ENCODE measurements at regions of chr9 and their contacts with region 1.

Region 1: DNA sequence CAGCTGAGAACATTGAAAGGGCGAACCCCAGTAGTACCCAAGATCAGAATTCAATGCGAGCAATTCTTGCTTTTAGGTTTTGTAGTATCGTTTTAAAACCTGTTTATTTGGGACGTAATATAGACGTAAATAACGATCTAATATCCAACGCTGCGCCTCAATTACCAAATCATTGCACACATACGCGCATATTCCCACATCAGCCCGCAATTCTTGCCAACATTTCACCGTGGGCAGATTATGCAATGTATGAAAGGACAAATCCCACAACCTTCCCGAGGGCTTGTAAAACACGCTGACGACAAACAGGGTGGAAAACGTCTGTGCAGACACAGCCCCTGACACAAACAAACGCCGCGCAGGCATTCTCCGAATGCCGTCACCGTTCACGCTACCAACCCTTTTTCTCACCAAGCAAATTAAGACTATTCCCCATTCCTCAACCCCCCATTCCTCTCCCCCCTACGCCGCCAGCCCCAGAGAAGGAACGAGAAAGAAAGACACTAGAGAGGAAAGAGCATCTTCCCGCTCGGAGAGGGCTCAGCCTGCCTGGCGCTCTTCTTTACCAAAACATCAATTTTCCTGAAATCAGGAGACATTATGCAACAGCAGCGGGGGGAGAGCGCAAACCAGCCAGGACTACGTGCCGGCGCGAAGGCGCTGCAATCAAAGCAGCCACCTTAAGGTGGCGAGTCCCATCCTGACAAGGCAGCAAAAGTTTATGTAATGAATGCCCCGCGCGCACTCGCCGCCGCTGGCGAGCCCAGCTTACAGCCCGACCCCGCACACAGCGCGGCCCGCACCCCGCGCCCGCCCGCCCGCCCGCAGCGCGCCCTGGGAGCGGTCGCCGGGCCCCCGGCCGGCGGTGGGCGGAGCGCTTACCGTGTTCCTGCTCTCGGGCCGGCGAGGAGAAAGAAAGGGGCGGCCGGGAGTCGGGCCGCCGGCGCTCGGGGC is 597 bp downstream of the NFIL3 start:
- DNase-seq: peak; percentile 73 to 85
- ATAC-seq: peak; percentile 24
- H3K4me3 ChIP-seq: peak overlapping the region; percentile 90 to 99
- H3K27ac ChIP-seq: peak overlapping the region; percentile 97 to 98
- H3K4me1 ChIP-seq: peaks cover 4 to 5% of the 10 kb centered on the region in 2 donors
- H3K27me3 ChIP-seq: no peaks in the 10 kb centered on the region

Region 2: DNA sequence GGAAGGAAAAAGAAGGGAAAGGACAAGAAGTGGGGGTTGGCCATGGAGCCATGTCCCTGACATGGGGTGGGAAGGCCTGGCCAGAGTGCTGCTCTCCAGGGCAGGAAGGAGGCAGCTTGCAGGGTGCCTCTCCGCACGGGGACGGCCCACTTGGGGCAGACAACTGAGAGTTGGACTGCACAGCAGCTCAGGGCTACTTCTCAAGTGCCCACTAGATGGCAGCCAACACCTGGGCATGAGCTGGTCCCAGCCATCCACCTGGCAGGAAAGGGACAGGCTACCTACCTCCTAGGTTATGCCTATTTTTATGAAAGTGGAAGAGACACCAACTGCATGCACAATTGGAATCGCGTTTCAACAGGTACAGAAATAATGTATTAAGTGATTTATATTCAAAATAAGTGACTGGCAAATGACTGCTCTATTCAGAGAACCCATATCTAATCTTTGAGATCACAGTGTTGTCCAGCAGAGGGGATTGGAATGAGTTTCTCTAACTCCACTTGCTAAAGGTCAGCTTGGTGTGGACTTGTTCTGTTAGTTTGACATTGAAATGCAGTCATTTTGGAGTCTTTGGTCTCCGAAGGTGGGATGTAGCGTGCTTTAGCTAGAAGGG is 508.1 kb before region 1 on chr9:
- intact Hi-C with region 1: loop called in 1 of 2 experiments (anchors 5 kb)
- DNase-seq: peak; percentile 73 to 87
- ATAC-seq: peak; percentile 89
- H3K4me3 ChIP-seq: no peak overlapping the region
- H3K27ac ChIP-seq: no peak overlapping the region
- H3K4me1 ChIP-seq: peaks cover 0 to under 1% of the 10 kb centered on the region in 2 donors
- H3K27me3 ChIP-seq: no peaks in the 10 kb centered on the region

Region 3: GRCh38 chr9:91036826-91037510 is 386.1 kb before region 1 on chr9:
- intact Hi-C with region 1: loop called in 1 of 2 experiments (anchors 5 kb)
- DNase-seq: peak; percentile 85 to 90
- ATAC-seq: peak; percentile 94
- H3K4me3 ChIP-seq: no peak overlapping the region
- H3K27ac ChIP-seq: no peak overlapping the region
- H3K4me1 ChIP-seq: no peaks in the 10 kb centered on the region
- H3K27me3 ChIP-seq: no peaks in the 10 kb centered on the region

Region 4: DNA sequence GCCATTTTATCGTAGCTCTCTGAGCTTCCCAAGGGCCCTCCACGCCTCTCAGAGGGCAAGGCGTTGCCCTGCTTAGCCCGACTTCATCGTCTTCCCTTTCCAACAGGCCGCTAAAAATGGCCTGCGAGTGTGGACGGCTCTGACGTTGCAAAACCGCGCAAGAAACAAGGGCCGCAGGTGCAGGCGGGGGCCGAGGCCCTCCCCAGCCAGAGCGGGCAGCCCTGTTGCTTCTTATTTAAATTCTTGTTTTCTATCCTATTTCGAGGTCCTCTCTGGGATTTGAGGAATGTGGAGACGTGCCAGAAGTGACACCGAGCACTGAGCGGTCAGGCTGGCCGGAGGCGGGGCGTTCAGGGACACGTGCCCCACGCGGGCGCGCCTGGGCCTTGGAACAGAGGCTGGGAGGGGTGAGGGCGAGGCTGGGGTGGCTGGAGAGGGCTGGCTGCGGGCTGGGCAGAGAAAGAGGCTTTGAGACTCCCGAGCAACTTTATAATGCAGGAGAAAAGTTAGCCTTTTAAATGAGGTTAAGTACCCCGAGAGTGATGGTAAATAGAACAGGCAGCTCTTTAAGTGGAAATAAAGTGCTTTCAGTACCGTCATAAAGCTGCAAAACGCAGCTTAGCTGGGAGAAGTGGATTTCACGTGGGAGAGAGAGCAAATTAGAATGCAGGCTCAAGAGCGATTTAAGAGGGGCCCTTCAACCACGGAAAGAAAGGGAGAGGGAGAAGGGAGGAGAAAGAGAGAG is 304.9 kb before region 1 on chr9:
- intact Hi-C with region 1: loop called (anchors 5 to 10 kb)
- DNase-seq: peak; percentile 92 to 95
- ATAC-seq: peak; percentile 96
- H3K4me3 ChIP-seq: no peak overlapping the region
- H3K27ac ChIP-seq: peak overlapping the region; percentile 72 to 83
- H3K4me1 ChIP-seq: peaks cover 0 to 2% of the 10 kb centered on the region in 2 donors
- H3K27me3 ChIP-seq: no peaks in the 10 kb centered on the region

Region 5: DNA sequence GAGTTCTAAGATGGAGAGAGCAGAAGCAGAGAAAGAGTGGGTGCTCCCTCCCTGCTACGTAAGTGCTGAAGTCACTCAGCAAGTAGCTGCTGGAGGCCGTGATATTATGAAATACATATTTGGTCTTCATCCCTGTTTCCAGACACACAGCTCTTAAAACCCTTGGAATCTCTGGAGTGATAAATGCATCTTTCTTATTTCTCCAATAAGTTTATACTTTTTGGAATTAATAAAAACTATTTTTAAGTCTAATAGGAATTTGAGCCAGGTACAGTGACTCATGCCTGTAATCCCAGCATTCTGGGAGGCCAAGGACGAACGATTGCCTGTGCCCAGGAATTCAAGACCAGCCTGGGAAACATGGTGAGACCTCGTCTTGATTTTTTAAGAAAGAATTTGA is 121.9 kb before region 1 on chr9:
- intact Hi-C with region 1: loop called (anchors 5 to 10 kb)
- DNase-seq: no peak
- ATAC-seq: peak; percentile 76
- H3K4me3 ChIP-seq: no peak overlapping the region
- H3K27ac ChIP-seq: peak overlapping the region; percentile 57 to 98
- H3K4me1 ChIP-seq: peaks cover 3 to 9% of the 10 kb centered on the region in 2 donors
- H3K27me3 ChIP-seq: no peaks in the 10 kb centered on the region

Region 6: DNA sequence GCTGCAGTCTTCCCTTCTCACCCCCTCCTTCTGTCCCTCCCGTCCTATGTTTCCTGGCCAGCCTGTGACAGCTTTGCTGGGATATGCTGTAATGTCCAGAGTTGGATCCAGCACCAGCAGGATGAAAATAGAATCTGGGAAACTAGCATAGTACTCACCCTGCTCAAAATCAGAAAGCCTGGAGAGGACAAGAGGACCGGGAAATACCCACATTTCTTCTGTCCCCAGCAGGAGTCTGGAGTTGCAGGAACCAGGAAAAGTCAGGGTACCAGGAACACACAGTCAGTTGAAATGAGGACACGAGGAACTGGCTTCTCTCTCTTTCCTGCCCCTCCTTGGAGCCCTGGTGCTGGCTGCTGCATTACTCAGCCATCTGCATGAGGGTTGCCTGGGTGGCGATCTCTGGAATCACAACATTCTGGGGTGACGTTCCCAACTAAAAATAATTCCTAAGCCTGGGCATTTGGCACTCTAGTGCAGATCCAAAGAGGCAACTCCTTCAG is 60.2 kb after region 1 on chr9:
- intact Hi-C with region 1: loop called in 1 of 2 experiments (anchors 5 kb)
- DNase-seq: peak in 1 of 2 donors; percentile 76
- ATAC-seq: peak; percentile 83
- H3K4me3 ChIP-seq: no peak overlapping the region
- H3K27ac ChIP-seq: peak overlapping the region; percentile 6 to 73
- H3K4me1 ChIP-seq: peaks cover 0 to 4% of the 10 kb centered on the region in 2 donors
- H3K27me3 ChIP-seq: no peaks in the 10 kb centered on the region